PC-9 (cell line): ENCODE measurements at regions of chr7 and their contacts with region 1.

Region 1: GRCh38 chr7:155380221-155380861 is 77.6 kb upstream of the EN2 start:
- DNase-seq: peak; percentile 46 to 55
- H3K4me3 ChIP-seq: no peak overlapping the region
- H3K27ac ChIP-seq: no peak overlapping the region
- H3K4me1 ChIP-seq: no peaks in the 10 kb centered on the region
- H3K27me3 ChIP-seq: peaks cover 100% of the 10 kb centered on the region
- CTCF ChIP-seq: peak; percentile 85

Region 2: DNA sequence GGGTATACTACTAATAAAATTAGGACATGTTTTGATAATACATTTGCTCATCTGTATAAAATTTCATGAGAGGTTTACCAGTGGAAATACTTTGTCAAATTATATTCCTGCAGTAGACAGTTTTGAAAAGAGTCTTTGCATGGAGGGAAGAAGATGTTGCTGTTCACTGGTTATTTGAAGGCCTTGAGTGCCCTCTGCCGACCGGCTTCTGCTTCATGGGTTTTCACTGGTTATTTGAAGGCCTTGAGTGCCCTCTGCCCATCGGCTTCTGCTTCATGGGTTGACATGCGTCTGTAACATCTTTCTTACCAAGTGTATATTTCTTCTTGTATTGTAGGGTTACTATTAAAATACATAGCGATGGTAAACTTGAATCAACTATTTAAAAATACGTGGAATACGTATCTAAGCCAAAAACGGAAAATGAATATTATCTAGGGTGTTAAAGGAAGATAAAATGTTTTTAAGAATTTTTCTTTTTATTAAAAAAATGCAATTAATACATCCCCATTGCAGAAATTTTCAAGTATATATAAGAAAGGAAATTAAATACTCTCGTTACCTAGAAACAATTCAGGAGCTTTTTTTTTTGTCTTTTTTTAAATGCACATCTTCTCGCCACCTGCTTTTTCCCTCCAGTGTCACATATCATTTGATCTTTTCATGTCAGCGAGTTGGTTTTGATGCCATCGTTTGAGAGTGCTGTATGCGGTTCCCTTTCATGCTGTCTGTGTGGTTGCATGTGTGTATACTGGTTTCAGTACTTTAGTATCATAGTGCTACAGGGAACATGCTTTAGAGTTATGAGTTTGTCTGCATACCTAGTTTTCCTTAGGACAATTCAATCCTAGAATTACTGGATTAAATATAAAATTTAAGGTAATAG is 358.6 kb after region 1 on chr7:
- CTCF ChIA-PET with region 1: no interaction called
- POLR2A ChIA-PET with region 1: no interaction called
- intact Hi-C with region 1: loop called (anchors 10 kb)
- DNase-seq: peak; percentile 51 to 60
- H3K4me3 ChIP-seq: no peak overlapping the region
- H3K27ac ChIP-seq: no peak overlapping the region
- H3K4me1 ChIP-seq: no peaks in the 10 kb centered on the region
- H3K27me3 ChIP-seq: no peaks in the 10 kb centered on the region
- CTCF ChIP-seq: peak; percentile 84